Mammary epithelial cell (primary cell): ENCODE measurements at regions of chr1 and their contacts with region 1.

Region 1: GRCh38 chr1:5514519-5515183 is 477.6 kb downstream of the NPHP4 start:
- DNase-seq: peak; percentile 6
- H3K4me3 ChIP-seq: no peak overlapping the region
- H3K27ac ChIP-seq: no peak overlapping the region
- H3K4me1 ChIP-seq: no peaks in the 10 kb centered on the region
- H3K27me3 ChIP-seq: no peaks in the 10 kb centered on the region
- CTCF ChIP-seq: peak; percentile 97 to 98

Region 2: DNA sequence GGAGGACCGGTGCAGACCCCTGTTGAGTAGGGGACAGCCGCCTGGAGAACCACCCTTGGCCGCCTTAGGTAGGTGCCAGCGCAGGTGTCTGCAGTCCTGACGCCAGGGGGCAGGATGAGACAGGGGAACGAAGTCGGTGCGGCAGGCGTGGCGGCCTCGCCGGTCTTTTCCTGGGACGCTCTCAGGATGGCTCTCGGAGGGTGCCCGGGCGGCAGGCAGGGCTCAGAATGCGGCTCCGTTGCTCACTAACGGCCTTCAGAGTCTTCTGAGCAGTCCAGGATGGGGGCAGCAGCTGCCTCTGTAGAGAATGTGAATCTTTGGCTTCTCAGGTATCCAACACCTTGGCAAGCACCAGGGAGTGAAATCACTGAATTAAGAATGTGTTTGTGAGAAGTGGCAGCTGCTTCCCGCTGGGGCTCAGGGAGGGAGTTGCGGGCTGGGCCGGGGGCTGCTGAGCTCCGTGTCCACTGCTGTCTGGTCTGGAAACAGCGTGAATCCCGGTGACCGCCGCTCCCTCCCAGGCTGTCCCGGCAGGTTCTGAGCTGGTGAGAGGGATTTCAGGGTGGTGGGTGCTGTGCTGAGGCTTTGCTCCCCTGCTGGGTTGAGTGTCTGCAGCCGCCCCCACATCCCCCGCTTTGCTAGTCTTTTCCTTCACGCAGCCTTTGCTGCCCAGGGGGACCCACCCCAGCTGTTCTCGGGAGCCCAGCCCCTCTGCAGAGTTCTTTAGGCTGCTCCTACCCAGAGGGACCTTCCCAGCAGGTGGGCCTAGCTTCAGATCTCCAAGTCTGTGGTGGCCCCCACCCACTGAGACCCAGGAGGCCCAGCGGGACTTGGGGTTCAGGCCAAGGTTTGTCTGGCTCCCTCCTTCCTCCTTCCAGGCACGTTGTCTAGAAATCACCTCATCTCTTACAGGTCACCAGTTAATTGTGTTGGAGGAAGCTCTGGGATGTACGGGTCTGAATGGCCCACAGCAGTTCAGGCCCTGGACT is 1603.5 kb before region 1 on chr1:
- CTCF ChIA-PET with region 1: no interaction called
- dilution Hi-C with region 1: no loop called
- in situ Hi-C with region 1: no loop called
- intact Hi-C with region 1: loop called (anchors 2 kb)
- DNase-seq: peak; percentile 52
- H3K4me3 ChIP-seq: peak overlapping the region in 1 of 3 experiments; percentile 19
- H3K27ac ChIP-seq: no peak overlapping the region
- H3K4me1 ChIP-seq: peaks cover 4% of the 10 kb centered on the region
- H3K27me3 ChIP-seq: no peaks in the 10 kb centered on the region
- CTCF ChIP-seq: peak; percentile 80 to 89

Region 3: GRCh38 chr1:5620990-5621389 is 106.3 kb after region 1 on chr1:
- CTCF ChIA-PET with region 1: no interaction called
- dilution Hi-C with region 1: no loop called
- in situ Hi-C with region 1: no loop called
- intact Hi-C with region 1: loop called (anchors 5 kb)
- DNase-seq: no peak
- H3K4me3 ChIP-seq: no peak overlapping the region
- H3K27ac ChIP-seq: no peak overlapping the region
- H3K4me1 ChIP-seq: no peaks in the 10 kb centered on the region
- H3K27me3 ChIP-seq: no peaks in the 10 kb centered on the region
- CTCF ChIP-seq: peak; percentile 3 to 39

Region 4: DNA sequence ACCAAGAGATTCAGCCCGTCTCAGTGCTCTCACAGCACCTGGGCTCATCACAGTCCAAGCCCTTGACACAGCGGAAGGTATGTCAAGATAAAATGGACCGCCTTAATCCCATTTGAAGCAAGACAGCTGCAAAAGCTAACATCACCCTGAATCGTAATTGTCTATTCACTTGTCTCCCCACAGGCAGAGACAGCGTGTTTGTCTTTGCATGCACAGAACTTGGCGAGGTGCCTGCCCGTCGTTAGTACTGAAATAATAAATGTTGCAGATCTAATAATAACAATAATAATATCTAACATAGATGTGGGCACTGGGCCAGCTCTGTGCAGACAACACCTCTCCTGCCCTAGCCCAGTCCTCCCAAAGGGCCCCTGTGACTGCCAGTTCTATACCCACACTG is 205.8 kb after region 1 on chr1:
- CTCF ChIA-PET with region 1: no interaction called
- dilution Hi-C with region 1: loop called (anchors 10 kb)
- in situ Hi-C with region 1: no loop called
- intact Hi-C with region 1: no loop called
- DNase-seq: no peak
- H3K4me3 ChIP-seq: no peak overlapping the region
- H3K27ac ChIP-seq: no peak overlapping the region
- H3K4me1 ChIP-seq: no peaks in the 10 kb centered on the region
- H3K27me3 ChIP-seq: no peaks in the 10 kb centered on the region
- CTCF ChIP-seq: no peak

Region 5: DNA sequence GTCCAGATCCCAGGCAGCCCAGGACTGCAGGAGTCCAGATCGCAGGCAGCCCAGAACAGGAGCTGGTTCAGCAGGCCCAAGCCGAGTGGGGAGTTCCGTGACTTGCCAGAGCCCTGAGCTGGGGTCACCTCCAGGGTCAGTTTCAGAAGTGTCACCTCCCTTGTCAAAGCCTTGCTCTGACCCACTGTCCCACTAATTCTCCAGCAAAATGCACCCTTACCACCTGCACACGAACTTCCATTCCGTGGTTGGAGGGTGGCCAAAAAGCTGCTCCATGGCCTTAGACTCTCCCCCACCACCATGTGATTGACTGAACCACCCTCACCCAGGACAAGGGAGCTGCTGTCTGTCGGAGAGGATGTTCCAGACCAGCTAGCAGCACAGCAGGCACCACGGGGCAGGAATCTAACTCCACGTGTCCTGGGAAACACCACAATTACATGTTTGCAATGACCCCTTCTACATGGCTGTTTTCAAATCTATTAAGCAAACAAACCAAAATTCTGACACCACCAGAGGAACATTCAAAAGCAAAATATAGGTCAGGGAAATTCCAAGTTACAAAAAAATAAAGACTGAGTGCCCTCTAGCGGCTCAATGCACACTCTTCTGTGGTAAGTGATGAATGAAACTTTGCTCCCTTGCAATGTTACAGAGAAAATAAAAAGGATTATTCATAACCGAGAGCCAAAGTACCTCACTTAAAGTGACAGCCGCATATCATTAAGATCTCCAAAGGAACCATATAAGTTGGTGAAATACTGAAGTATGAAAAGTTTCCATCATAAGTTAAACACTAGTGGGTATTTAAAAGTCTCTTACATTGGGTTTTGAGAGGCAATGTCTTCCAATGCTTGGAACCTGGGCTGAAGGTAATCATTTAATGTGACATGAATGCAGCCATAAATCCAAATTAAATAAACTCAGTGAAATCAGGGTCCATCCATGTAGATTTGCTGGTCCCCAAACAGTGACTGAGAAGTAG is 401.2 kb after region 1 on chr1:
- CTCF ChIA-PET with region 1: no interaction called
- dilution Hi-C with region 1: no loop called
- in situ Hi-C with region 1: loop called (anchors 25 kb)
- intact Hi-C with region 1: loop called (anchors 1 kb)
- DNase-seq: peak; percentile 58
- H3K4me3 ChIP-seq: no peak overlapping the region
- H3K27ac ChIP-seq: no peak overlapping the region
- H3K4me1 ChIP-seq: peaks cover 8% of the 10 kb centered on the region
- H3K27me3 ChIP-seq: no peaks in the 10 kb centered on the region
- CTCF ChIP-seq: peak; percentile 73 to 77